MCF 10A (cell line): ENCODE measurements at regions of chr4 and their contacts with region 1.

Region 1: DNA sequence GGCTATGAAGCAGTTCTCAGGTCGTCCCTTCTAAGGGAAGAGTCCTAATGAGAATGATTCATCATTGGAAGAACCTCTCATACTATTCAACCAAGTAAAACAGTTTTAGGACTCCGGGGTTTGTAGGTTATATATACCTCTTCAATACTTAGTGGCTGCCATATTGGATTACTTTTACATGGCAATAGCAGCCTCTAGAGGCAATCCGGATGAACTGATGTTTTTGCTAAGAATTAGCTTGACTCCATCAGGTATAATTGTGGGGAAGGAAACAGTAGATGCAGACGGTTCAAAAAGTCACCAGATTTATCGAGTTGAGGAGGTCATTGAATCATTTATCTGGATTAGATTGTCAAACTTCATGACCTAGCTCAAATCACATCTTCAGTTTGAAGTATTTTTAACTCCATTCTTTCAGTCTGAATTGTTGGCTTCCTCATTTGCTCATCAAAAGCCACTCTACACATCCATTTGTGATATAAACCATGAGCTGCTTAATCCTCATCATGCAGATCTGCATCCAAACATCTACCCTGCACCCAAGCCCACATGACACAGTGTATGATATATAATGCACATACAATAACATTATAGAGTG is 28.4 kb downstream of the GUCY1B1 start:
- DNase-seq: peak; percentile 73
- H3K4me3 Mint-ChIP-seq: no peak overlapping the region
- H3K27ac Mint-ChIP-seq: no peak overlapping the region
- H3K4me1 Mint-ChIP-seq: peaks cover 5% of the 10 kb centered on the region
- H3K27me3 Mint-ChIP-seq: no peaks in the 10 kb centered on the region
- CTCF ChIP-seq: peak; percentile 74

Region 2: GRCh38 chr4:155403886-155404285 is 383.3 kb before region 1 on chr4:
- CTCF ChIA-PET with region 1: interaction called, 35 read pairs
- POLR2A ChIA-PET with region 1: interaction called, 4 read pairs
- intact Hi-C with region 1: loop called (anchors 1 kb)
- DNase-seq: peak; percentile 61
- H3K4me3 Mint-ChIP-seq: no peak overlapping the region
- H3K27ac Mint-ChIP-seq: no peak overlapping the region
- H3K4me1 Mint-ChIP-seq: no peaks in the 10 kb centered on the region
- H3K27me3 Mint-ChIP-seq: no peaks in the 10 kb centered on the region
- CTCF ChIP-seq: peak; percentile 56

Region 3: GRCh38 chr4:155854597-155855226 is 67.5 kb after region 1 on chr4:
- CTCF ChIA-PET with region 1: no interaction called
- POLR2A ChIA-PET with region 1: no interaction called
- intact Hi-C with region 1: no loop called
- DNase-seq: peak; percentile 11
- H3K4me3 Mint-ChIP-seq: no peak overlapping the region
- H3K27ac Mint-ChIP-seq: no peak overlapping the region
- H3K4me1 Mint-ChIP-seq: no peaks in the 10 kb centered on the region
- H3K27me3 Mint-ChIP-seq: no peaks in the 10 kb centered on the region
- CTCF ChIP-seq: no peak

Region 4: GRCh38 chr4:155972098-155972497 is 184.9 kb after region 1 on chr4:
- CTCF ChIA-PET with region 1: no interaction called
- POLR2A ChIA-PET with region 1: no interaction called
- intact Hi-C with region 1: no loop called
- DNase-seq: peak; percentile 18
- H3K4me3 Mint-ChIP-seq: no peak overlapping the region
- H3K27ac Mint-ChIP-seq: no peak overlapping the region
- H3K4me1 Mint-ChIP-seq: no peaks in the 10 kb centered on the region
- H3K27me3 Mint-ChIP-seq: no peaks in the 10 kb centered on the region
- CTCF ChIP-seq: no peak